AG04449 (cell line): ENCODE measurements at regions of chr9 and their contacts with region 1.

Region 1: DNA sequence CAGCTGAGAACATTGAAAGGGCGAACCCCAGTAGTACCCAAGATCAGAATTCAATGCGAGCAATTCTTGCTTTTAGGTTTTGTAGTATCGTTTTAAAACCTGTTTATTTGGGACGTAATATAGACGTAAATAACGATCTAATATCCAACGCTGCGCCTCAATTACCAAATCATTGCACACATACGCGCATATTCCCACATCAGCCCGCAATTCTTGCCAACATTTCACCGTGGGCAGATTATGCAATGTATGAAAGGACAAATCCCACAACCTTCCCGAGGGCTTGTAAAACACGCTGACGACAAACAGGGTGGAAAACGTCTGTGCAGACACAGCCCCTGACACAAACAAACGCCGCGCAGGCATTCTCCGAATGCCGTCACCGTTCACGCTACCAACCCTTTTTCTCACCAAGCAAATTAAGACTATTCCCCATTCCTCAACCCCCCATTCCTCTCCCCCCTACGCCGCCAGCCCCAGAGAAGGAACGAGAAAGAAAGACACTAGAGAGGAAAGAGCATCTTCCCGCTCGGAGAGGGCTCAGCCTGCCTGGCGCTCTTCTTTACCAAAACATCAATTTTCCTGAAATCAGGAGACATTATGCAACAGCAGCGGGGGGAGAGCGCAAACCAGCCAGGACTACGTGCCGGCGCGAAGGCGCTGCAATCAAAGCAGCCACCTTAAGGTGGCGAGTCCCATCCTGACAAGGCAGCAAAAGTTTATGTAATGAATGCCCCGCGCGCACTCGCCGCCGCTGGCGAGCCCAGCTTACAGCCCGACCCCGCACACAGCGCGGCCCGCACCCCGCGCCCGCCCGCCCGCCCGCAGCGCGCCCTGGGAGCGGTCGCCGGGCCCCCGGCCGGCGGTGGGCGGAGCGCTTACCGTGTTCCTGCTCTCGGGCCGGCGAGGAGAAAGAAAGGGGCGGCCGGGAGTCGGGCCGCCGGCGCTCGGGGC is 597 bp downstream of the NFIL3 start:
- DNase-seq: no peak
- H3K4me3 ChIP-seq: peak overlapping the region; percentile 87
- CTCF ChIP-seq: peak; percentile 44

Region 2: DNA sequence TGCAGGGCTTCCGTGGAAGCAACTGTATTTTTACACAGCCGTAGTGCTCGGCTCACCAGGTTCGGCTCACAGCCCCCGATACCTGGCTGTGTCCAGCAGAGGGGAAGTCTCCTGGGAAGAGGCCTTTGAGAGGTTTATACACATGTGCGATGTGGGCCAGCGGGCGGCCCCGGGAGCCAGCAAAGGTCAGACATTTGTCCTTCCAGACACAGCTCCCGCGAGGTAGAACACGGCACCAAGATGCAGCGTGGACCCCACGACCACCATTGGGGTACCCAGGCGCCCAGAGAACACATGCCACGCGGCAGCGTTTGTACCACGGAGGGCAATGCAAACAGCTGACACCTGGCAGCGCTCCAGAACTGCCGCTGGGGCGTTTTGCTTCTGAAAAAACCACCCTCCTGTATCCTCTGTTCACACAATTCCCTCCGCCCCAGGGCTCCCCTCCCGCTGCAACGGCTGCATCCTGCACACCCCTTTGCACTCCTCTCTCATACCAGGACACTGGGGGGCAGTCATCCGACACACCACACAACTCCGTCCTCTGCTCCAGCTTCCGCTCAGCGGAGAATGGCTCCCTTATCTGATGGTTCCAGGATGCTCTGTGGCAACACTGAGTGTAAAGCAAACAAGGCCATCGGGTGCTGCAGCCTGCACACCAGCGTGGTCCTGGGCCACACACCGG is 386.1 kb before region 1 on chr9:
- CTCF ChIA-PET with region 1: interaction called, 39 read pairs
- POLR2A ChIA-PET with region 1: interaction called, 4 read pairs
- DNase-seq: peak; percentile 66
- H3K4me3 ChIP-seq: peak overlapping the region; percentile 8; the same call in 1 of the 2 replicates
- CTCF ChIP-seq: peak; percentile 72

Region 3: GRCh38 chr9:91089405-91090129 is 333.5 kb before region 1 on chr9:
- CTCF ChIA-PET with region 1: interaction called, 28 read pairs
- POLR2A ChIA-PET with region 1: no interaction called
- DNase-seq: no peak
- H3K4me3 ChIP-seq: no peak overlapping the region
- CTCF ChIP-seq: peak; percentile 72

Region 4: GRCh38 chr9:91100878-91101450 is 322.1 kb before region 1 on chr9:
- CTCF ChIA-PET with region 1: interaction called, 10 read pairs
- POLR2A ChIA-PET with region 1: no interaction called
- DNase-seq: no peak
- H3K4me3 ChIP-seq: no peak overlapping the region
- CTCF ChIP-seq: no peak